GM13977 (cell line): ENCODE measurements at regions of chr10 and their contacts with region 1.

Region 1: GRCh38 chr10:124732931-124733570 is 11.1 kb downstream of the FAM53B start:
- DNase-seq: peak; percentile 59
- CTCF ChIP-seq: no peak

Region 2: DNA sequence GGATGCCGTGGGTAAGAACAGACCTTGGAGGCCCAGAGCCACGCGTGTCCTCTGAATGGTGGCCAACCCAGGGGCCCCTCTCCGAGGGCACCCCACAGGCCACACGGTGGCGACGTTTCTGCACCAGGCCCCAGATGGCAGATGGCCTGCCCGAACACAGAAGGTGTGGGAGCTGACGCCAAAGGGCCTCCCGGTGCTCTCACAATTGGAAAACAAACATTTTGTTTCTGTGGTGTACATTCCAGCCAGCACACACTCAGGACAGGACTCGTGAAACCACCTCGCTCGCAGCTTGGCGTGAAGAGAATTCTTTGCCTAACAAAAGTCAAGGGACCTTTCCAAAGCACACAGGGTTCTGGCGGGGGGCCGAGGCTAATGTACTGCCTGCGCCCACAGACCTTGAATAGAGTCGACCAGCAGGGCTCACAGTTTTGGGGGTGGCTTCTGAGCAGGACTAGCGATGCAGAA is 101.0 kb before region 1 on chr10:
- in situ Hi-C with region 1: loop called (anchors 10 kb)
- DNase-seq: no peak
- CTCF ChIP-seq: peak; percentile 47

Region 3: DNA sequence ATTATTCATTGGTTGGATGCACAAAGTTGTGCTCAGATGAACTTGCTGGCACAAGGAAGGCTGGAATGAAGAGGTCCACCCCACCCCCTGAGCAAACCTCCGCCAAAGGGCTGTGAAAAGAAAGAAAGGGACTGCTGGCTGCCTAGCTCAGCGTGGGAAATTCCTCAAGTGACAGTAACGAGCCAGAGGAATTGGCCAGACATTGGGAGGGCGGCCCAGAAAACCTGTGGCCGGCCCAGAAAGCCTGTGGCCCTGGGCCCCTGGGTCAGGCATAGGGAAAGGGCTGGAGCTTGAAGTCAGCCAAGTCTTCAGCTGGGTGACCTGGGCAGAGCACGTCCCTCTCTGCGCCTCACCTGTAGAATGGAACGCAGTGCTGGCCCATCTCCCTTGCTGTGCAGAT is 457.9 kb after region 1 on chr10:
- in situ Hi-C with region 1: no loop called
- DNase-seq: no peak
- CTCF ChIP-seq: no peak